Ascending aorta (tissue), 2 donors: ENCODE measurements at regions of chr5 and their contacts with region 1.

Region 1: GRCh38 chr5:154754460-154755360 is 467 bp upstream of the LARP1 start:
- DNase-seq: peak; percentile 96 to 100
- H3K4me3 ChIP-seq: peak overlapping the region; percentile 79 to 90
- H3K27ac ChIP-seq: peak overlapping the region; percentile 94 to 96
- H3K4me1 ChIP-seq: peaks cover 10 to 30% of the 10 kb centered on the region in 2 donors
- H3K27me3 ChIP-seq: no peaks in the 10 kb centered on the region
- CTCF ChIP-seq: peak; percentile 32 to 43 (median 41)

Region 2: DNA sequence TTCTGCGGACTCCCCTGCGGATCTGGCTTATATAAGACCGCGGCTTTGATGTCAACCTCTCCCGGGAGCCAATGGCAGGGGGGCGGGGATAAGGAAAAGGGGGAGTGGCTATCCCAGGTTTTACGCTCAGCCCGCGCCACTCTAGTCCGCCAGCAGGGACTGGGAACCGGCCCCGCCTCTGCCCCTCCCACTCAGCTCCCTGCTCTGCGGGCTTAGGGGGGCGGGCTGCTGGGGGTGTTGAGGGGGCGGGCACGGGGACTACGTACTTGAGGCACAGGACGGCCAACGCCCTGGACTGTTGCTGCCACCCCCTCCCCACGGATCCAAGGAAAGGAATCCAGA is 276.5 kb before region 1 on chr5 and contains the start of gene HAND1:
- intact Hi-C with region 1: loop called (anchors 10 kb)
- DNase-seq: no peak
- H3K4me3 ChIP-seq: peak within 1 kb of the TSS; percentile 38 to 63
- H3K27ac ChIP-seq: no peak within 1 kb of the TSS
- H3K4me1 ChIP-seq: peaks cover 13 to 45% of the 10 kb centered on the region in 2 donors
- H3K27me3 ChIP-seq: peaks cover 98% of the 10 kb centered on the region
- CTCF ChIP-seq: no peak
- total RNA-seq, gene HAND1: not detected

Region 3: DNA sequence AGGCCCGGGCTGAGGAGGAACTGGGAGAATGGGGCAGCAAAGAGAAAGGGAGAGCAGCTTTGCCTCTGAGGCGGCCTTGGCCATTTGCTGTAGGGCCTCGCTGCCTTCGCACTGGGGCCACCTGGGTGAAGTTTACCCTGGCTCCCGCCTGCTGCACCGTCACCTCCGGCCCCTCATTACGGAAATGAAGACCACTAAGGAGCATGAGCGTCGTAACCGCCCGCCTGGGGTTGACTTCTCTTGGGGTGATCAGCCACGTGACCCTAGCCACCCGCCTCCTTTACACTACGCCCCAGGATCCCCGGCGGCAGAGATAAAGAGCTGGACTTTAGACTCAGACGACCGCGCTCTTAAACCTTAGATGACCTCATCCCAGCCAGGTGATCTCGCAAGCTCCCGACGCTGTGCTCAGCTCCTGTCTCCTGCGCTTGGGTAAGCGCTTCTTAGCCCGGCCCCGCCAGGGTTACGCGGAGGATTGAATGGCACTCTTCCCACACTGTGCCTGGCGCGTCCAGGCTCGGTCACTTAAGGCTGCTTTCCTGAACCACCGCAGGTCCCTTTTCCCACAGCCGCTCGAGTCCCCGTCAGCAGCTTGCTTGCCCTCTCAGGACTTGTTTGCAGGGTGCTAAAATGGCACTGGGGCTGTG is 107.5 kb before region 1 on chr5:
- intact Hi-C with region 1: no loop called
- DNase-seq: no peak
- H3K4me3 ChIP-seq: peak overlapping the region; percentile 18 to 61
- H3K27ac ChIP-seq: no peak overlapping the region
- H3K4me1 ChIP-seq: peaks cover 0 to 9% of the 10 kb centered on the region in 2 donors
- H3K27me3 ChIP-seq: no peaks in the 10 kb centered on the region
- CTCF ChIP-seq: no peak

Region 4: DNA sequence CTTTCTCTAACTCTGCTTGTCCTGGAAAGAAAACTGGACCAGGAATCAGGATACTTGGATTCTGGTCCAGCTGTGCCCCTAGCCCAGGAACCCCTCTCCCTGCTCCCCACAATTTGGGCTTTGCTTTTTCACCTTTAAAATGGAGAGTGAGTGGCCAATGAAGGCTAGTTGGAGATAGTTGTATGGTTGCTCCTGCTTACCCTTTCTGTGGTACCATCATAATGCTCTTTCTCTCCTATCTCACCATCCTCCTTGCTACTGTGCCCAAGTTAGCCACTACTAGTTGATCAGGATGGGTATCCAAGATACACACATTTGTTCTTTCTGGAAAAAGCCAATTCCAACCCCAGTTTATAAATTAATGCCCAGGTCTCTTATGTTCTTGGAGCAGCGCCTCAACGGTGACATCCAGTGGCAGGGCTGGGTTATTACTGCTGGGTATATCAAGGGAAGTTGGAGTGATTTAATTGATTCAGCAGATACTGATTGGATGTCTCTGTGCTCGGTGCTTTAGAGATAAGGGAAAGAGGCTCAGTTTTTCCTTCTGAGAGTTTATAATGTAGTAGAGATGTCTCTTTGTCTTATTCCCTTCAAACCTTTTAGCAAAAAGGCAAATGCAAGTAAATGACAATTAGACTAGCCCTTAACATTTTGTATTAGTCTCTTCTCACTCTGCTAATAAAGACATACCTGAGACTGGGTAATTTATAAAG is 57.1 kb after region 1 on chr5:
- intact Hi-C with region 1: loop called (anchors 2 kb)
- DNase-seq: peak in 1 of 2 donors; percentile 76
- H3K4me3 ChIP-seq: no peak overlapping the region
- H3K27ac ChIP-seq: no peak overlapping the region
- H3K4me1 ChIP-seq: no peaks in the 10 kb centered on the region
- H3K27me3 ChIP-seq: no peaks in the 10 kb centered on the region
- CTCF ChIP-seq: peak; percentile 70 to 89 (median 81)

Region 5: DNA sequence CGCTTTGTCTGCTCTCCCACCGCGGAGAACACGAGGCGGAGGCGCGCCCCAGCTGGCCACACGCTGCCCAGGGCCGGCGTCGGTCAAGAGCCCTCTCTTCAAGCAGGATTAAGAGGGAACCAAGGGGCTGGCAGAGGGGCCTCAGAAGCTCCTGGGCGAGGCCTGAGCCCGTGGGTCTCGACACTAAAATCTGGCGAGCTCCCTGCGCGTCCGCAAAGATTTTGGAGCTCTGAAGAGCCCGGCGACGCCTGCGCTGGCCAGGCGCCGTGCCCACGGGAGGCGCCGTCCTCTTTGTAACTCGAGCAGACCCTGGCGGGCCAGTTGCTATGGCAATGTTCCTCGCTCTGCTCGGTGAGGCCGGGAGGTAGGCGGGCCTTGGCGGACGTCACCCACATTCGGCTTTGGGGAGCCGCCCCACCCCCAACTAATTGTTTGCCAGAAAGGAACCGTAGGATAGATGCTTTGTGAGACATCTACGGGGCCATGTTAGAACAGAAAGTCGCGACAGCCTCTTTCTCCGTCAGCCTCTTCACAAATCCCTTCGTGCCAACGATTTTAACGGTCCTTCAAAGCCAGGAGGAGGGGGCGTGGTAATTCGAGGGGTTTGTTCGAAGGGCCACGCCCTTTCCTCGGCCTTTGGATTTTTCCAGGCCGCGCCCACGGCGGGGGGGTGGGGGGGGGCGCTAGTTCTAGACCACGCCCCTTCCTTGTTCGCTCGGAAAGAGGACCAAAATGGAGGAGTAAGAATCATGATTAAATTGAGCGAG is 103.0 kb after region 1 on chr5:
- intact Hi-C with region 1: loop called (anchors 1 kb)
- DNase-seq: peak; percentile 91 to 98
- H3K4me3 ChIP-seq: peak overlapping the region; percentile 74 to 90
- H3K27ac ChIP-seq: peak overlapping the region; percentile 94 to 98
- H3K4me1 ChIP-seq: peaks cover 0 to 22% of the 10 kb centered on the region in 2 donors
- H3K27me3 ChIP-seq: no peaks in the 10 kb centered on the region
- CTCF ChIP-seq: peak in 1 of 3 experiments; percentile 3